ENCODE measurements at regions of chr16 and their contacts with region 1.

Region 1: DNA sequence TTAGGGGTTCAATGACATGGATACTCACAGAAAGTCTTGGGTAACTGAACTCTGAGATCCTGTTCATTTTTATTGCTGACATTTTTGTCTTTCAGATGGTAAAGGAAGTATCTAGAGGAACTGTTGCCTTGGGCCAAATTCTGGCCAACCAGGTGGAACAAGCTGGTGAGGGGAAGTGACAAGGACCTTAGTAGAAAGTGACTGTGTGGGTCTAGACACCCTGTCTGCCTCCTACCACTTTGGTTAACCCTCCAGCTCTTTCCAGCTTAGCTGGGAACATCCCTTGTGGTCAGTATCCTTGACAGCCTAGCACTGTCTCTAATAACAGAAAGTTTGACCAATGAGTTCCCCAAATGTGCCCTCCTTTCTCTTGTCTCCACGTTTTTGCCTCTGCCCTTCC is 28.8 kb upstream of the PRKCB start:
- DNase-seq: no peak
- ATAC-seq: peak; percentile 59

Region 2: DNA sequence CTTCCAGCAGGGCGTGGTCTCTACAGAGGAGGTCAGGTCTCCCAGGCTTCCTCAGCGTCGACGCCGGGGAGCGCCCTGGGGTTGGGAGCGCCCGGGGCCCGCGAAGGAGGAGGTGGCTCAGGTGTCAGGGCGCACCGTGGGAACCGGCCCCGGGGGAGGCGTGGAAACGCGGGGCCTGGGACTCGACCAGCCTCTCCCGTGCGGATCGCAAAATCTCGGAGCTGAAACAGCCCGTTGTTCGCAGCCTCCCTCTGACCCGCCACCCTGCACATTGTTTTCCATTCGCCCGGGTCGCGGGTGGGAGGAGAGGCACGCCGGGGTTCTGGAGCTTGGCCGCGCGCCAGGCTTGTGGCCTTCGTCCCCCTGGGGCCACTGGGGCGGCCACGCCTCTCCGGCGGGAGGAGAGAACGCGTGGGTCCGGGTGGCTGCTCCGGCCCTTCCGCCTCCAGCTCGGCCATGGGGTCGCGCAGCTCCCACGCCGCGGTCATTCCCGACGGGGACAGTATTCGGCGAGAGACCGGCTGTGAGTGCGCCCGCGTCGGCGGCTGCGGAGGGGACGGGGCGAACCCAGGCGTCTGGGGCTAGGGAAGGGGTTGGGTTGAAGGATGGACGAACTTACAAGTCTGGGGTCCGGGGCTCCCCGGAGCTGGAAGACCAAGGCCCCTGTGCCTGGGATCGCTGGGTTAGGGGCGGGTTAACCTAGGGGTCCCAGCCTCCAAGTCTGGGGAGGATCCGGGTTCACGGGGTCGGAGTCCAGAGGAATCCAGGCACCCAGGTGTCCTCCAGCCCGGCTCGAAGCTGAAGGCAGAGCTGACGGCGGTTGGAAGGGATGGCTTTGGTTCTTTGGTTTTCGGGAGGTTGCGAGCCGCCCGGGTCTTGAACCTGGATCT is 52.2 kb before region 1 on chr16 and contains the start of gene CHP2:
- intact Hi-C with region 1: loop called (anchors 10 kb)
- DNase-seq: peak; percentile 81
- ATAC-seq: peak; percentile 83
- total RNA-seq, gene CHP2: 22.6 TPM